GM12878 (cell line): ENCODE measurements at regions of chr5 and their contacts with region 1.

Region 1: DNA sequence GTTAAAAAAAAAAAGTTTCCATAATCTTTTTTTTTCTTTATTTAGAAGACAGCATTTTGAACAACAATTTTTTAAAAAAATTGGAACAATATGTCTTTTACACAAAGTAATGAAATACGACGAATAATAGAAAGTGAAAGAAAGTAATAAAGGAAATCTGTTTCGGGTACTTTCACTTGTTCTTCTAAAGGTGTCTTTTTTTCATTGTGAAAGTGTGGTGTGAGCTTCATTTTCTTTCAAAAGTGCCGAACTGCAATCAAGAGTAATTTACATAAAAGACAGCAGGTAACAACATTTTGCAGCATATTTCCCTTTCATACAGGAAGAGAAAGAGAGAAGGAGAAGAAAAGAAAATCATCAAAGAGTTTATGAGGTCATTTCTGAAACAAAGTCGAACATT is 159.7 kb upstream of the CDH12 start:
- DNase-seq: peak; percentile 17
- ATAC-seq: peak; percentile 89
- H3K4me3 ChIP-seq: no peak overlapping the region
- H3K27ac ChIP-seq: no peak overlapping the region
- H3K4me1 ChIP-seq: no peaks in the 10 kb centered on the region
- H3K27me3 ChIP-seq: no peaks in the 10 kb centered on the region
- CTCF ChIP-seq: no peak
- EP300 ChIP-seq: no peak
- POLR2A ChIP-seq: no peak
- RAD21 ChIP-seq: no peak

Region 2: DNA sequence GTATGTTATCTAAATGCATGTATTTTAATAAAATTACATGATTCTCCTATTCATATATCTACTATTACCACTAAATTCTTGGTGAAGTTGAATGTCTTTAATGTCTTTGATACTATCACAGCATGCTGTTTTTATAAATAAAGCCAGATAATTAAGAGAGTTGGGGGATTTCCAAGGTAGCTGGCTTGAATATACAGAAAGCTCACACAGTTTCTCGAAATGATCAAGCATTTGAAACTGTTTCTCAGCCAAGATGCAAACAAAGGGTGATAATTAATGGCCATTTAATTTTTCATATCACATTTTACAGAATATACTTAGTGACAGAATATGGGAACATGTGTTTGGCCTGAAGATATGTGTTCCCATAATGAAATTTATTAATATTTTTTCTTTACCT is 14.1 kb before region 1 on chr5:
- CTCF ChIA-PET with region 1: interaction called, 3 read pairs
- POLR2A ChIA-PET with region 1: no interaction called
- RAD21 ChIA-PET with region 1: interaction called, 12 read pairs
- SMC1A ChIA-PET with region 1: interaction called, 10 read pairs
- in situ Hi-C with region 1: no loop called
- intact Hi-C with region 1: no loop called
- DNase-seq: peak; percentile 24
- ATAC-seq: peak; percentile 94
- H3K4me3 ChIP-seq: no peak overlapping the region
- H3K27ac ChIP-seq: no peak overlapping the region
- H3K4me1 ChIP-seq: no peaks in the 10 kb centered on the region
- H3K27me3 ChIP-seq: no peaks in the 10 kb centered on the region
- CTCF ChIP-seq: no peak
- EP300 ChIP-seq: peak; percentile 28 to 74; a peak in 2 of 4 replicates
- POLR2A ChIP-seq: no peak
- RAD21 ChIP-seq: no peak